ENCODE measurements at regions of chr7 and their contacts with region 1.

Region 1: DNA sequence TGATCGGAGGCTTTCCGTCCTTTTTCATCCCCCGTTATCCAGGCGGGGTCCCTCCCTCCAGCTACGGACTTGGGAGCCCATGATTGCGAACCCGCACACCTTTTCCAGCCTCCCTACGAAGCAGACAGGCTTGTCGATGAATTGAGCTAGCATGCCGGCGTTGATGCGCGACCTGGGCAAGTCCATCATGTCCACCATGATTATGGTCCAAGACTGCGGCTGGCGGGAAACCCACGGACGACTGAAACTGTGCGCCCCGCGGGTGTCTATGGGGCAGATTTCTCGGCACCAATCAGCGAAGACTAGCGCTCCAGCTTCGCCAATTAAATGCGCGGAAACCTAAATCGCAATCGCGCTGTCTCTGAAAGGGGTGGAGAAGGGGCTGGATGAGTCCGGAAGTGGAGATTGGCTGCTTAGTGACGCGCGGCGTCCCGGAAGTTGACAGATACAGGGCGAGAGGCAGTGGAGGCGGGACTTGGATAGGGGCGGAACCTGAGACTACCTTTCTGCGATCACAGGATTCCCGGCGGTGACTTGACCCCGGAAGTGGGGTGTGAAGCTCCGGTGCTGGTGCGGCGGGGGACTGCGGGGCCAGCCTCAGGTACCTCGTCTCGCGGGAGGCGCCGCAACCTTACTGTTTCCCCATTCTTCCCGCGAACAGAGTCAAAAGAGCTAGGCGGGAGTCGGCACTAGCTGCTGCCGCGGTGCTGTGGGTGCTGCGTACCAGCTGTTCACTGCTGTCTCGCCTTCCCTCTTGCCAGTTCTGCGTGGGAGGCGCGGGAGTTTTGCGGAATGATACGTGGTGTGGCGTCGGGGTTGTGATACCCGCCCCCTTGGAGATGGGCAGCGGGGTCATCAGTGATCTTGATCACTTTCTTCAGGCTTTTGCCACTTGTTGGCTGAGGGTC is at the start of gene UMAD1:
- DNase-seq: peak; percentile 99
- ATAC-seq: peak; percentile 92
- H3K4me3 Mint-ChIP-seq: peak within 1 kb of the TSS; percentile 93
- H3K27ac Mint-ChIP-seq: peak within 1 kb of the TSS; percentile 99
- H3K4me1 Mint-ChIP-seq: peaks cover 38% of the 10 kb centered on the region
- H3K27me3 Mint-ChIP-seq: no peaks in the 10 kb centered on the region
- total RNA-seq, gene UMAD1: 13.1 to 14.5 TPM

Region 2: DNA sequence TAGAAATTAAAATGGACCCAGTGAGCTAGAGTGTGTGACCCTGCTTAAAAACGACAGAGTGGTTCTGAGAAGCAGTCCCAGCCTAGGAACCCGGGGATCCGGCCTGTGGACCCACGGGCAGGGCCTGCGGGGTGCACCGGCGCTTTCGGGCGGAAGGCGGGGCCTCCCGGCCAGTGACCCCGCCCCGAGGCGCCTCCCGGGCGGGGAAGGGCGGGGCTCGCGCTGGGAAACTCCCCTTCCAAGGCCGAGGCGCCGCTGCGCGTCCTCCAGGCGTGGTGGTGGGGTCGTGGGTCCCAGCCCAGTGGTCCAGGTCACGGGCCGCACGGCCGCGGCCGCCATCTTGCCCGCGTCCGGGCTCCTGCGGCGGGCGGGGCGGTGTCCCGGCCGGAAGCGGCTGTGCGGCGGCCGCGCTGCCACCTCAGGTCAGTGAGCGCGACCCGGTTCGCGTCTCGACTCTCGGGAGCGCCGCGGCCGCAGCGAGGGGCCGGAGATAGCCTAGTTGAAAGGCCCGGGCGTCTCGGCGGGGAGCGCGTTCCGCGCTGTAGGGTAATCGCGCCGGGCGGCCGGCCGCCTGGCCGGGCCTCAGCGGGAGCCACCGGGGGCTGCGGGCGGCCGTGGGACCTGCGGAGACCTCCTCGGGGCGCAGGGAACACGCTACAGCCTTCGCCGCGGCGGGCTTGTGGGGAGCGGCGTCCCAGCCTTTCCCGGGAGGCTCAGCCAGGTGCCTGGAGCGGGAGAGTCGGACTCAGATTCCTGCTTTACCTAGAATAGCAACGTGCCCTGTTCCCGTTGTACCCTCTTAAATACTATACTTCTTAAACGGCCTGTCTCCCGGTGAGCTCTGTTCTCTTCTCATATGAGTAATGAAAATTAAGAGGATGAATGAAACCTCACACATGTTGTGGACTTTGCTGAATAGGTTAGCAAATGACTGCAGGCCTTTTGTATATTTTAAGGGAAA is 73.5 kb before region 1 on chr7 and contains the start of gene MIOS:
- CTCF ChIA-PET with region 1: no interaction called
- POLR2A ChIA-PET with region 1: interaction called, 6 read pairs
- intact Hi-C with region 1: loop called (anchors 1 kb)
- DNase-seq: peak; percentile 89
- ATAC-seq: peak; percentile 90
- H3K4me3 Mint-ChIP-seq: peak within 1 kb of the TSS; percentile 83
- H3K27ac Mint-ChIP-seq: peak within 1 kb of the TSS; percentile 90
- H3K4me1 Mint-ChIP-seq: peaks cover 29% of the 10 kb centered on the region
- H3K27me3 Mint-ChIP-seq: no peaks in the 10 kb centered on the region
- total RNA-seq, gene MIOS: 41.7 to 45.7 TPM

Region 3: DNA sequence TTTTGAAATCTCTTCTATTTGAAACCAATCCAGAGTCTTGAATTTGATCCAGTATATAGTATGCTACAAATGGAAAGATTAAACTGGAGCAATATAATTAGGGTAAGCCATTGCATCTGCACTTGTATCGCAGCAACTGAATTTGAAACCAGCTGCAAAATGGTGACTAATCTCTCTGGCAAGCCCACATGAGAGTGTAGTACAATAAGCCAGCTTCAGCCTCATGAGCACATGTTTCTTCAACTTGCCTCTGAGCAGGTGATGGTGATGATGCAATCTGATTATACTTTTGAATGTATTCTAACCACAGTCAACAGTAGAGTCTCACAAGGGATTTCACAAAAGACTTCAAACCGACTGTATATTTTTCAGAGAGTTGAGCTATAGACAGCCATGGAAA is 78.8 kb after region 1 on chr7:
- CTCF ChIA-PET with region 1: interaction called, 3 read pairs
- POLR2A ChIA-PET with region 1: interaction called, 3 read pairs
- intact Hi-C with region 1: loop called in 1 of 2 experiments (anchors 2 kb)
- DNase-seq: peak; percentile 66
- ATAC-seq: peak; percentile 99
- H3K4me3 Mint-ChIP-seq: peak overlapping the region; percentile 8
- H3K27ac Mint-ChIP-seq: peak overlapping the region; percentile 84
- H3K4me1 Mint-ChIP-seq: peaks cover 28% of the 10 kb centered on the region
- H3K27me3 Mint-ChIP-seq: no peaks in the 10 kb centered on the region

Region 4: GRCh38 chr7:7816084-7816483 is 175.6 kb after region 1 on chr7:
- CTCF ChIA-PET with region 1: no interaction called
- POLR2A ChIA-PET with region 1: no interaction called
- intact Hi-C with region 1: loop called in 1 of 2 experiments (anchors 1 kb)
- DNase-seq: no peak
- ATAC-seq: peak; percentile 27
- H3K4me3 Mint-ChIP-seq: no peak overlapping the region
- H3K27ac Mint-ChIP-seq: no peak overlapping the region
- H3K4me1 Mint-ChIP-seq: peaks cover 36% of the 10 kb centered on the region
- H3K27me3 Mint-ChIP-seq: no peaks in the 10 kb centered on the region

Region 5: DNA sequence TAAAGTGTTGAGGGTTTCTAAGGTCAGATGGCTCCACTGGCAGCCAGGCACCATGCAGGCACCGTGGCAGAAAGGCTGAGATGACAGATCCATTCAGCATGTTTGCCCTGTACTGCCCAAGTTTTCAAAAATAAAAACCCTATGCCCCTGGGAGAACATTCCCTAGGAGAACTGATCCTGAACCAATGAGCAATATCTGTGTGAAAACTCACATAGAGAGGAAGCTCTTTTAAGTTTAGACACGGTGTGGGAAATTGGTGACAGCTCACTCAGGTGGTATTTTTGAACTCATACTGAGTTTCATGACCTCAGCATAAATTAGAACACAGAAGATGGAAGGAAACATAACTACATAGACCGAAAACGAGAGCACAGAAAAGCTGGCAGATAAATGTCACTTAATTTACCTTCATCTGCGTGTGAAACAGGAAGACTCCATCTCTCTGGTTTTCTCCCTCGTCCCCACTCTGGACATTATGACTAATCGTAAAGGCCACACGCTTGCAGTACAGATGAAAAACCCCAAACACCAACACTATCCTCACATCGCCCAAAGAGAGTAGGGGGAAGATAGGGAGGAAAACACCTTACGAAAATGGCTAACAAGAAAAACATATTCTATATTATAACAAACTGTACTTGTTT is 493.7 kb after region 1 on chr7:
- CTCF ChIA-PET with region 1: interaction called, 3 read pairs
- POLR2A ChIA-PET with region 1: interaction called, 6 read pairs
- intact Hi-C with region 1: loop called in 1 of 2 experiments (anchors 2 kb)
- DNase-seq: peak; percentile 60
- ATAC-seq: peak; percentile 84
- H3K4me3 Mint-ChIP-seq: peak overlapping the region; percentile 22
- H3K27ac Mint-ChIP-seq: peak overlapping the region; percentile 79
- H3K4me1 Mint-ChIP-seq: peaks cover 56% of the 10 kb centered on the region
- H3K27me3 Mint-ChIP-seq: no peaks in the 10 kb centered on the region